K562 (cell line): ENCODE measurements at regions of chr5 and their contacts with region 1.

Region 1: DNA sequence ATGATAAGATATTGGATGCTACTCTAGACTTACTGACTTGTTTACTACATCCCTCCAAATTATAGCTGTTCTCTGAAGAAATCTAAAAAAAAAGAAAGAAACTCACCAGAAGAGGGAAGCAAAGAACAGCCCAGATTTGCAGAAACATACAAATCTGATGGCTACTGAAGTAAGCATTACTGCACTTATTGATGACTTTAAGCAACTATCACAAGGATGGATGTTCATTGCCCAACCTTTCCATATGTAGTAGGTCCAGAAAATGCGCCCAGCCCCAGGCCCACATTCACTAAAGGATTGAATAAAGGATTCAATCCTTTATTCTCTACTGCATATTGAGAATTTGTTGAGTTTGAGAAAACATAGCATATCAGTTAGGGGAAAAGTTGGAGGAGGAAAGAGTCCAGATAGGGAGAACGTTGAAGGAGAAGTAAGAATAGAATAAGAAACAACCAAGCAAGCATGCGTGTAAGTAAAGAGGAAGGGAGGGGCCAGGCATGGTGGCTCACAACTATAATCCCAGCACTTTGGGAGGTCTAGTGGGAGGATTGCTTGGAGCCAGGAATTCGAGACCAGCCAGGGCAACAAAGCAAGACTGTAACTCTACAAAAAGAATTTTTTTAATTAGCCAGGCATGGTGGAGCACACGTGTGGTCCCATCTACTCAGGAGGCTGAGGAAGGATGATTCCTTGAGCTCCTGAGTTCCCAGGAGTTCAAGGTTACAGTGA is 33.8 kb upstream of the DTWD2 start:
- DNase-seq: peak in 2 of 4 experiments; percentile 32 to 40
- ATAC-seq: peak; percentile 87
- H3K4me3 ChIP-seq: no peak overlapping the region
- H3K27ac ChIP-seq: no peak overlapping the region
- H3K4me1 ChIP-seq: no peaks in the 10 kb centered on the region
- H3K27me3 ChIP-seq: no peaks in the 10 kb centered on the region
- CTCF ChIP-seq: peak; percentile 29 to 71 (median 52); a peak in 5 of 6 replicates
- EP300 ChIP-seq: no peak
- POLR2A ChIP-seq: no peak
- RAD21 ChIP-seq: peak; percentile 71 to 88

Region 2: GRCh38 chr5:118762291-118762690 is 259.9 kb before region 1 on chr5:
- CTCF ChIA-PET with region 1: no interaction called
- POLR2A ChIA-PET with region 1: no interaction called
- in situ Hi-C with region 1: no loop called
- intact Hi-C with region 1: no loop called
- DNase-seq: no peak
- ATAC-seq: no peak
- H3K4me3 ChIP-seq: no peak overlapping the region
- H3K27ac ChIP-seq: no peak overlapping the region
- H3K4me1 ChIP-seq: no peaks in the 10 kb centered on the region
- H3K27me3 ChIP-seq: no peaks in the 10 kb centered on the region
- CTCF ChIP-seq: no peak
- EP300 ChIP-seq: no peak
- POLR2A ChIP-seq: no peak
- RAD21 ChIP-seq: no peak

Region 3: GRCh38 chr5:119049824-119050449 is 27.8 kb after region 1 on chr5:
- CTCF ChIA-PET with region 1: no interaction called
- POLR2A ChIA-PET with region 1: no interaction called
- in situ Hi-C with region 1: no loop called
- intact Hi-C with region 1: no loop called
- DNase-seq: no peak
- ATAC-seq: no peak
- H3K4me3 ChIP-seq: no peak overlapping the region
- H3K27ac ChIP-seq: no peak overlapping the region
- H3K4me1 ChIP-seq: peaks cover 0 to 9% of the 10 kb centered on the region in 2 experiments; a peak in 2 of 5 replicates
- H3K27me3 ChIP-seq: no peaks in the 10 kb centered on the region
- CTCF ChIP-seq: no peak
- EP300 ChIP-seq: no peak
- POLR2A ChIP-seq: no peak
- RAD21 ChIP-seq: no peak

Region 4: GRCh38 chr5:119131530-119132313 is 109.5 kb after region 1 on chr5:
- CTCF ChIA-PET with region 1: no interaction called
- POLR2A ChIA-PET with region 1: no interaction called
- in situ Hi-C with region 1: no loop called
- intact Hi-C with region 1: loop called (anchors 10 kb)
- DNase-seq: no peak
- ATAC-seq: no peak
- H3K4me3 ChIP-seq: no peak overlapping the region
- H3K27ac ChIP-seq: no peak overlapping the region
- H3K4me1 ChIP-seq: no peaks in the 10 kb centered on the region
- H3K27me3 ChIP-seq: no peaks in the 10 kb centered on the region
- CTCF ChIP-seq: no peak
- EP300 ChIP-seq: no peak
- POLR2A ChIP-seq: no peak
- RAD21 ChIP-seq: no peak

Region 5: DNA sequence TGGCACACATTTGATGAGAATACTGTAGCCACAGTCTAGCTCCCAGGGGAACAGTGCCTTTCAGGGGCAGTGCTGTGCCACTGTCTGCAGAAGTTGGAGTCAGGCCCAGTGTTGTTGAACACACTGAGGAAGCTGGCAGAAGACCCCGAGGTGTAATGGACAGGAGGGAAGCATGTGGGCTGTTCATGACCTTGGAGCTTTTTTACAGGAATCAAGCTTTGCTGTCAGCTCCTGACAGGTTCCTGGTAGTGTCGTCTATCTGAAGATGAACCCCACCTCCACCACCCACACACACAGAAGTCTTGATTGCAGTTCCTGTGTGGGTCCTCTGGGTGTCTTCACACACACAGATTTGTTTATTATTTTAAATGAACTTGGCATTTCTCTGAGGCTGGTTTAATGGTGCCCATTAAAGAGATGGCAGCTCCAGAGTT is 293.4 kb after region 1 on chr5:
- CTCF ChIA-PET with region 1: no interaction called
- POLR2A ChIA-PET with region 1: no interaction called
- in situ Hi-C with region 1: no loop called
- intact Hi-C with region 1: loop called (anchors 10 kb)
- DNase-seq: peak; percentile 61 to 80 (median 70)
- ATAC-seq: peak; percentile 77
- H3K4me3 ChIP-seq: no peak overlapping the region
- H3K27ac ChIP-seq: peak overlapping the region; percentile 37; the same call in 1 of the 3 replicates
- H3K4me1 ChIP-seq: peaks cover 11 to 44% of the 10 kb centered on the region in 2 experiments
- H3K27me3 ChIP-seq: no peaks in the 10 kb centered on the region
- CTCF ChIP-seq: peak; percentile 49 to 67 (median 56); a peak in 5 of 6 replicates
- EP300 ChIP-seq: peak; percentile 32; the same call in 1 of the 2 replicates
- POLR2A ChIP-seq: no peak
- RAD21 ChIP-seq: peak; percentile 57 to 65

Region 6: DNA sequence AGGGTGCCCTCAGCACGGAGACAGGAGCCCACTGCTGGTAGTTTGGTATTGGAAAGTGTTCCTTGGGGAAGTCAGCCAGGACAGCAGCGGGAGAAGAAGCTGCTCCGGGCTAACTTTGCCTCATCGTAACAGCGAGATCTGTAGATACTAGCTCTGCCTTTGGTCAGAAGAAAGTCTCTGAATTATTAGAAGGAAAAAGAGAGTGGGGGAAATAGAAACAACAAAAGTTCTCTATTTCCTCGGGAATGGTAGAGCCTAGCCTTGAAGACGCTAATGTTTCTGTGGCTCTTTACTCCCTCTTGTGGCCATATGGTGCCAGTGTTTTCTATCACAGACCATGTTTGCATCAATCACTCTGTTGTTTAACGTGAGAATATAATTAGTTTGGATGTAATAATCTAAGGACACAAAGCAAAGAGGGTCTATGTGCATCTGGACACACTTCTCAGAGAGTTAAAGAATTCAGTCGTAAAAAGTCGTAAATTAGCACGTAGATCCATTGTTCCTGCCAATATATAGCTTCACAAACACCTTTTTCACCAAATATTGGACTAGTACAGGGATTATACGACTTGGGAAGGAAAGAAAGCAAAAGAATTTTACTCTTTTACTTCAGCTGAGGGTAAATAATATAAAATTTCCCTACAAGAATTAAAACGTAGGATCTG is 389.9 kb after region 1 on chr5:
- CTCF ChIA-PET with region 1: interaction called, 20 read pairs
- POLR2A ChIA-PET with region 1: no interaction called
- in situ Hi-C with region 1: no loop called
- intact Hi-C with region 1: loop called (anchors 1 kb)
- DNase-seq: peak; percentile 69 to 84 (median 72)
- ATAC-seq: peak; percentile 96
- H3K4me3 ChIP-seq: peak overlapping the region; percentile 6
- H3K27ac ChIP-seq: peak overlapping the region; percentile 27; the same call in 1 of the 3 replicates
- H3K4me1 ChIP-seq: peaks cover 0 to 10% of the 10 kb centered on the region in 2 experiments; a peak in 3 of 5 replicates
- H3K27me3 ChIP-seq: no peaks in the 10 kb centered on the region
- CTCF ChIP-seq: peak; percentile 78 to 94 (median 87)
- EP300 ChIP-seq: no peak
- POLR2A ChIP-seq: no peak
- RAD21 ChIP-seq: peak; percentile 96 to 97